ENCODE measurements at regions of chr19 and their contacts with region 1.

Region 1: GRCh38 chr19:11924886-11925650 is at the start of gene ZNF700:
- DNase-seq: peak; percentile 94
- CTCF ChIP-seq: no peak

Region 2: DNA sequence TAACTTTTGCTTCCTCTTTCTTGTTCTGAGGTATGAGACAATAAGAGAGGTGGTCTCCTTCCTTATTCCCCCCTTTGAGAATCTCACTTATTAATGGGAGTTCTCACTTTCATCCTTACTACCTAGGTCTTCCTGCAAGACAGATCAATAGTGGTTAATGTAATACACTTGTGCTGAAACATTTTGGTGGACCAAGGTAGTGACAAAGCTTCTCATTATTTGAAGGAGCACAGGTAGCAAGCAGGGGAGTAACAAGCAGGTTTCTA is 17.7 kb after region 1 on chr19:
- CTCF ChIA-PET with region 1: interaction called, 10 read pairs
- POLR2A ChIA-PET with region 1: no interaction called
- DNase-seq: no peak
- CTCF ChIP-seq: no peak

Region 3: GRCh38 chr19:12000152-12000981 is 75.3 kb after region 1 on chr19:
- CTCF ChIA-PET with region 1: interaction called, 11 read pairs
- POLR2A ChIA-PET with region 1: no interaction called
- DNase-seq: peak; percentile 72
- CTCF ChIP-seq: no peak

Region 4: DNA sequence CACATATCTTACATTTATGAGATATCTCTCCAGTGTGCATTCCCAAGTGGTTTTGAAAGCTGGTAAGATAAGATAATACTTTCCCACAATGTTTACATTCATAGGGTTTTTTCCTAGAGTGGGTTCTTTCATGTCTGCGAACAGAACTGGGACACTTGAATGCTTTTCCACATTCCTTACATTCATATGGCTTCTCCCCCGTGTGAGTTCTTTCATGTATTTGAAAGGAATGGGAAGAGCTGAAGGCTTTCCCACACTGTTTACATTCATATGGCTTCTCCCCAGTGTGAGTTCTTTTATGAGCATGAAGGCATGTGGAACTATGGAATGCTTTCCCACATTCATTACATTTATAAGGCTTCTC is 90.7 kb after region 1 on chr19:
- CTCF ChIA-PET with region 1: no interaction called
- POLR2A ChIA-PET with region 1: no interaction called
- DNase-seq: no peak
- CTCF ChIP-seq: no peak

Region 5: GRCh38 chr19:12064590-12065538 is 139.8 kb after region 1 on chr19 and contains the start of gene ZNF844:
- CTCF ChIA-PET with region 1: interaction called, 26 read pairs
- POLR2A ChIA-PET with region 1: no interaction called
- DNase-seq: peak; percentile 93
- CTCF ChIP-seq: no peak

Region 6: DNA sequence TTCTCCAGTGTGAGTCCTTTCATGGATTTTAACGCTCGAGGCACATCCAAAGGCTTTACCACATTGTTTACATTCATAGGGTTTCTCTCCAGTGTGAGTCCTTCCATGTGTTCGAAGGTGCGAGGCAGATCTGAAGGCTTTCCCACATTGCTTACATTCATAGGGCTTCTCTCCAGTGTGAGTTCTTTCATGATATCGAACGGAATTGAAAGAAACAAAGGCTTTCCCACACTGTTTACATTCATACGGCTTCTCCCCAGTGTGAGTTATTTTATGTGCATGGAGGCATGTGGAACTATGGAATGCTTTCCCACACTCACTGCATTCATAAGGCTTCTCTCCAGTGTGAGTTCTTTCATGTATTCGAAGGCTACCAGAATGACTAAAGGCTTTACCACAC is 220.3 kb after region 1 on chr19:
- CTCF ChIA-PET with region 1: interaction called, 40 read pairs
- POLR2A ChIA-PET with region 1: no interaction called
- DNase-seq: no peak
- CTCF ChIP-seq: no peak

Region 7: DNA sequence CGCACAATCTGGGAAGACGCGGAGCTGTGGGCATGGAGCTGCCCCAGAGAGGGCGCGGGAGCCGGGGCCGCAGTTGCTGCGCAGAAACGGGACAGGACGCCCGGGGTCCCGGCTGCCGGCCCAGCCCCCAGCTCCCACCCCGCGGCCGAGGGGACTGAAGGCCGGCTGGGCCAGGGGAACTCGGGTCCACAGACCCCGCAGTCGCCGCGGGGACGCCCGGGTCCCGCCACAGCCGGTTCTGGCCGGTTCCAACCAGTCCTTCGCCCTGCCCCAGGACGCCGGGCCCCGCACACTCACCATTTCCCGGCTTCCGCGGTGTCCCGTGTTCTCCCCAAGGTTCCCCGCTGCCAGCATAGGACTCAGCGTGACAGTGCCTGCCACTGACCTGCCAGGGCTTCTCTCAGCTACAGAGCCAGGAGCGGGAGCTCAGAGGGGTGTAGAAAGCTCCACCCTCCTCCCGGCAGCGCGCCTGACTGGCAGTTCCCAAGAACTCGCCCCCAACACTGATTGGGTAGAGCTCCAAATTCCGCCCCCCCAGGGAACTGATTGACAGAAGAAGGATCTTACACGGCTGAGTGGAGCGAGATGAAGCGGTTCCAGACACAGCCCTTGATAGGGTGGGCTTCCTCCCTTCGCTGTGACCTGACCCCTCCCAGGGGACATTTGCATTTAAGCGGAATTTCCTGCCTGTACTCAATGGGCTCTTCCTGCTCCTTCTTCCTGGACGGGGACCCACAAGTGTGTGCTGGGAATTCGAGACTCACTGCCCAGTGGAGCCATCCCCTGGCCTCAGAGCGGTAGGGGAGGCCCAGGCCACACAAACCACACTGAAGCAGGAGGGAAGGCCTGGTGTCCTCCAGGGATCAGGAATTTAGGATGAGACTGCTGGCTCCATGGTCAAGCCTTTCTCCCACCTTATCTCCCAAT is 440.4 kb after region 1 on chr19 and contains the start of gene ZNF442:
- CTCF ChIA-PET with region 1: interaction called, 11 read pairs
- POLR2A ChIA-PET with region 1: no interaction called
- DNase-seq: peak; percentile 96
- CTCF ChIP-seq: peak; percentile 42

Measured in GM10248 (cell line).